BJ (cell line): ENCODE measurements at regions of chr19 and their contacts with region 1.

Region 1: DNA sequence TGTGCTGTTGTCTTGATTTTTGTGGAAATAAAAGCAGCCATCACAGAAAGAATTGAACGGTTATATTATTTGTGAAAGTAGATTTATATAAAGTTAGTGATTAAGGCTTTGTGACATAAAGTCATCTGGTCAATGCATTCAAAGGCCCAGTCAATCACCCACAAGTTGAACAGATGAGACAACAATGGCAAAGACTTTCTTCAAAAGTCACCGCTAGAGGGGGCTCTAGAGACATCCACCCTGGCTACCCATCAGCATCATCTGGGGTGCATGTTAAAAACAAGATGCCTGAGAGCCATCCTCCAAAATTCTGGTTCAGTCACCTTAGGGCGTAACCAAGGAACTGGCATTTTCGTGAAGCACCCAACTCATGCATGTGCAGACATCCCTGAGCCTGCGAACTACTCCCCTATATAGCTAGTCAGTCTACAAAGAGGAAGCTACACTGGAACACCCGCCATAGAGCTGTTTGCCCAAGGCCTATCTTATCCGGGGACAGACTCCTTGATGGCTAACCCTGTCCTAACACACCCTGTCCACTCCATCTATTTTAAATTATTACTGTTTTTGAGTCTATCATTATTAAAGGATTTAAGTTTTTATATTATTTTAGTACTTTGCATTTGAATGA is 970.5 kb downstream of the UQCRFS1 start:
- DNase-seq: no peak
- H3K4me3 ChIP-seq: no peak overlapping the region
- H3K27me3 ChIP-seq: no peaks in the 10 kb centered on the region
- CTCF ChIP-seq: peak; percentile 68

Region 2: GRCh38 chr19:28164214-28164613 is 78.2 kb before region 1 on chr19:
- CTCF ChIA-PET with region 1: no interaction called
- POLR2A ChIA-PET with region 1: no interaction called
- DNase-seq: no peak
- H3K4me3 ChIP-seq: no peak overlapping the region
- H3K27me3 ChIP-seq: no peaks in the 10 kb centered on the region
- CTCF ChIP-seq: no peak

Region 3: DNA sequence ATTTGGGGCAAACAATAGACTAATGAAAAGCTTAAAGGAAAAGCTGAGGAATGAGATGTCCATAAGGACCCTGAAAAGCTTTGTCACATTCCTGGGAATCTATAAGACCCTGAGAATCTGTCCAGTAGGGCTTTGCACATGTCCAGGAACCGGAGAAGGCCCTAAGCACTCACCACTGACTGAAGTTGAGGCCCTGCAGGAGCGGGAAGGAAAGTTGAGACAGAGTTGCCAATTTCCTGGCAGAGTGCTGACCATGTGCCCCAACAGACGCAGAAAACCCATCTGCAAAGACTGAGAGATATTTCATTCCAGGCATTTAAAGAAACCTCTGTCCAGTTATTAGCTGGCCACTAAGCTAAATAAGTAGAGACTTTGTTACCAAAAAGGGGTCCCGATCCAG is 80.1 kb after region 1 on chr19:
- CTCF ChIA-PET with region 1: interaction called, 16 read pairs
- POLR2A ChIA-PET with region 1: no interaction called
- DNase-seq: no peak
- H3K4me3 ChIP-seq: no peak overlapping the region
- H3K27me3 ChIP-seq: no peaks in the 10 kb centered on the region
- CTCF ChIP-seq: no peak

Region 4: DNA sequence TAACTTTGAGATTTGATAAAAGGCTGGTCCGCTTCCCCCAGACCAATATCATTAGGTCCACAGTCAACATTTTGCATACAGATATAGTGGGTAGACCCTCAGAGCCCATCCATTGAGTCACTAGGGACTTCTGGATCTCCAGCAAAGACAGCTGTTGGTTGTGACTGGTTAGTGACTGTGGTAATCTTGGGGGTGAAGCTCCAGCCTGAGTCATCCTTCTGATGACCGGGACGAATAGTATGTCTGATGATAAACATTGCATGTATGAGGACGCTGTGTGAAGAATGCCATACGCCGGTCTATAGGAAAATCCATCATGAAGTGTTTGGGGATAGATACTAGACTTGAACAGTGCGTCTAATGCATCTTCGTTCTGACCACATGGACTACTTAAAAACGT is 663.6 kb after region 1 on chr19:
- CTCF ChIA-PET with region 1: no interaction called
- POLR2A ChIA-PET with region 1: no interaction called
- DNase-seq: no peak
- H3K4me3 ChIP-seq: no peak overlapping the region
- H3K27me3 ChIP-seq: no peaks in the 10 kb centered on the region
- CTCF ChIP-seq: no peak